Aorta (tissue), 5 donors: ENCODE measurements at regions of chr6 and their contacts with region 1.

Region 1: GRCh38 chr6:84556541-84557335 is 207.7 kb downstream of the TBX18 start:
- DNase-seq: no peak
- ATAC-seq: peak; percentile 57
- H3K4me3 ChIP-seq: no peak overlapping the region
- H3K27ac ChIP-seq: peak overlapping the region in 1 of 2 donors; percentile 67
- H3K4me1 ChIP-seq: no peaks in the 10 kb centered on the region
- H3K27me3 ChIP-seq: no peaks in the 10 kb centered on the region

Region 2: DNA sequence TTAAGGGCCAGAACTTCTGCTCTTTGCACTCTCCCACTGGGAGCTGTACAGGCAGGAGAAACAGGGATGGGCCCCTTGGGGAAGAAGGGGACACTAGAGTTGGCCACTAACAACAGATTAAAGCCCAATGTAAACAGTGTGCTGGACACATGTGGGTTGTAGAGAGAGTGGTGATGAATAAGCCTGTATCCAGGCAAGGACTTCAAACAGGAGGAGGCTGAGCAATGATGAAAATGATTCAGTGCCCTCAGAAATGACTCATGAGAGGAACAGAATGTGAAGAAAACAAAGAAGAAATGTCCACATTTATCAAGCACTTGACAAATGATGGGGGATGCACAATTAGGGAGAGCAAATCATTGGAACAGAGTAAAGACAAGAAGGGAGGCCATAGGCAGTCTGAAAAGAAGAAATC is 34.6 kb before region 1 on chr6:
- intact Hi-C with region 1: loop called in 1 of 2 experiments (anchors 5 kb)
- DNase-seq: no peak
- ATAC-seq: peak; percentile 76
- H3K4me3 ChIP-seq: no peak overlapping the region
- H3K27ac ChIP-seq: peak overlapping the region in 1 of 2 donors; percentile 23
- H3K4me1 ChIP-seq: peaks cover 0 to 12% of the 10 kb centered on the region in 2 donors
- H3K27me3 ChIP-seq: no peaks in the 10 kb centered on the region